HepG2 (cell line): ENCODE measurements at regions of chr3 and their contacts with region 1.

Region 1: DNA sequence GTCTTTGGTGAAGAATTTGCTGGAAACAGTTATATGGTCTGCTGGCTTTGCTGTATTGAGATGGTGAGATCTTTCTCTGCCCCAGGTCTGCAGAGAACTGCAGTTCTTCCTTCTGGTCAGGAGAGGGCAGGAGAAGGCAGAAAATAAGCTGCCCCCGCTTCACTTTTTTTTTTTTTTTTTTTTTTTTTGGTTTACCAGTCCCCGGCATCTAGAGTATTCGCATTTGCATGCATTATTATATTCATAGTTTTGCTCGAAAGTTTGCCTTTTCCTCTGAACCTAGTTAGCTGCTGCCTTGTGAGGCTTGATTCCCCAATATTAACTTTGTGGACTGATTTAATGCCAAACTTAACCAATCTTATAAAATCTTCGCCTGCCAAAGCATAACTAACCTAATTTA is 10.6 kb upstream of the PARL start:
- DNase-seq: peak; percentile 44
- ATAC-seq: peak; percentile 67
- H3K4me3 ChIP-seq: no peak overlapping the region
- H3K27ac ChIP-seq: no peak overlapping the region
- H3K4me1 ChIP-seq: peaks cover 27% of the 10 kb centered on the region
- H3K27me3 ChIP-seq: peaks cover 0 to 12% of the 10 kb centered on the region in 2 experiments; a peak in 1 of 5 replicates
- CTCF ChIP-seq: peak; percentile 75
- EP300 ChIP-seq: no peak
- POLR2A ChIP-seq: no peak
- RAD21 ChIP-seq: peak; percentile 76

Region 2: DNA sequence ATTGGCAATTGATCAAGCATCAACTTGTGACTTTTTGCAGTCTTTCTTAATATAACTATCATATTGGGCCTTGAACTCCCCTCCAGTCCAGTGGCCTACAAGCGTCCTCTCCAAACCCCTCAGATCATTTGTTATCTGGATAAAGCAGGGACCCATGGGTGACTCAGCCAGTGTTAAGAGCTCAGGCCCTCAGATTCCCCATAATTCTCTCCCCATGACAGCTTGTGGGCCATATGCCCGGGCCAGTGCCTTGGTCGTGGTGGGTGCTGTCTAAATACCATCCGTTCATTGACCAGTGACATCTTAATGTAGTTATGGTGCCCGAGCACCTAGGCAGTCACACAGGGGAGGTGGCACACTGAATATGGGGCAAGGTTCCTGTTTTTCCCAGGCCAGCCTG is 485.0 kb before region 1 on chr3:
- CTCF ChIA-PET with region 1: no interaction called
- POLR2A ChIA-PET with region 1: no interaction called
- in situ Hi-C with region 1: no loop called
- intact Hi-C with region 1: no loop called
- DNase-seq: no peak
- ATAC-seq: no peak
- H3K4me3 ChIP-seq: no peak overlapping the region
- H3K27ac ChIP-seq: no peak overlapping the region
- H3K4me1 ChIP-seq: no peaks in the 10 kb centered on the region
- H3K27me3 ChIP-seq: peaks cover 0 to 13% of the 10 kb centered on the region in 2 experiments; a peak in 4 of 5 replicates
- CTCF ChIP-seq: no peak
- EP300 ChIP-seq: no peak
- POLR2A ChIP-seq: no peak
- RAD21 ChIP-seq: no peak

Region 3: DNA sequence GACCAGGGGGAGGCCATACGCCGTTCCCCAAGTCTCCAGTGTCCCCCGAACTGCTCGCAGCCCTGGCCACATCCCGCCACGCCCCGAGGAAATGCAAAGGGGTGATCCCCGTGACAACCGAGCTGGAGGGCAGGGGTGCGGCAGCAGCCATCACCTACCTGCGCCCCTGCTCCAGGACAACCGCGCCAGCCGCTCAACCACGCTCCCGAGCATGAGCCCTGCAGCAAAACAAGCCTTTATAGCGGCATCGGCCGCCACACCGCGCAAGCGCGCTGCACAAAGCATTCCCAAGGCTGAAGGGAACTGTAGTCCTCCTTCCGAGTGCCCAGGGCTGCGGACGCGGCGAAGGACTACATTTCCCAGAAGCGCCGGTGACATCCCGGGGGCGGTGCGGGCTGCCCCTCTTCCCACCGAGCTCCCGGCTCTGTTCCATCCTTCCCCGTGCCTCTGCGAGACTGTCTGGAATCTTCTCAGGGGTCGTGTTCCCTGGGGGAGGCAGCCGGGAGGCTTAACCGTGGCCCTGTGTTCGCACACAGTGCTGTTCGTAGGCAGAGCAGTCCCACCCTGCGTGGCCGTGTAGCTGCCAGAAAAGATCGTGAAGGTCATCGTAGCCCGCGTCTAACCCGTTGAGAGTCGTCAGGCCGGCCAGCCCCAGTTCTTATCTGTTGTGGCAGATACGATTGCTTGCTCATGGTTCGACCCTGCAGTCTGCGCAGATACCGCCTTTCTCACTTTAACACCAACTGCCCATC is 122.6 kb after region 1 on chr3 and contains the start of gene ABCC5:
- CTCF ChIA-PET with region 1: interaction called, 17 read pairs
- POLR2A ChIA-PET with region 1: interaction called, 6 read pairs
- in situ Hi-C with region 1: loop called (anchors 5 kb)
- intact Hi-C with region 1: loop called (anchors 1 kb)
- DNase-seq: peak; percentile 85
- ATAC-seq: peak; percentile 99
- H3K4me3 ChIP-seq: peak within 1 kb of the TSS; percentile 73 to 97 (median 79)
- H3K27ac ChIP-seq: peak within 1 kb of the TSS; percentile 30
- H3K4me1 ChIP-seq: peaks cover 32% of the 10 kb centered on the region
- H3K27me3 ChIP-seq: no peaks in the 10 kb centered on the region
- CTCF ChIP-seq: peak; percentile 42; the same call in 1 of the 2 replicates
- EP300 ChIP-seq: no peak
- POLR2A ChIP-seq: peak; percentile 31 to 89; a peak in 2 of 4 replicates
- RAD21 ChIP-seq: 0 out of 2 replicates have a peak, but pooled peaks have one; percentile 1
- total RNA-seq, gene ABCC5: 7.8 and 12.7 TPM in 2 replicates

Region 4: DNA sequence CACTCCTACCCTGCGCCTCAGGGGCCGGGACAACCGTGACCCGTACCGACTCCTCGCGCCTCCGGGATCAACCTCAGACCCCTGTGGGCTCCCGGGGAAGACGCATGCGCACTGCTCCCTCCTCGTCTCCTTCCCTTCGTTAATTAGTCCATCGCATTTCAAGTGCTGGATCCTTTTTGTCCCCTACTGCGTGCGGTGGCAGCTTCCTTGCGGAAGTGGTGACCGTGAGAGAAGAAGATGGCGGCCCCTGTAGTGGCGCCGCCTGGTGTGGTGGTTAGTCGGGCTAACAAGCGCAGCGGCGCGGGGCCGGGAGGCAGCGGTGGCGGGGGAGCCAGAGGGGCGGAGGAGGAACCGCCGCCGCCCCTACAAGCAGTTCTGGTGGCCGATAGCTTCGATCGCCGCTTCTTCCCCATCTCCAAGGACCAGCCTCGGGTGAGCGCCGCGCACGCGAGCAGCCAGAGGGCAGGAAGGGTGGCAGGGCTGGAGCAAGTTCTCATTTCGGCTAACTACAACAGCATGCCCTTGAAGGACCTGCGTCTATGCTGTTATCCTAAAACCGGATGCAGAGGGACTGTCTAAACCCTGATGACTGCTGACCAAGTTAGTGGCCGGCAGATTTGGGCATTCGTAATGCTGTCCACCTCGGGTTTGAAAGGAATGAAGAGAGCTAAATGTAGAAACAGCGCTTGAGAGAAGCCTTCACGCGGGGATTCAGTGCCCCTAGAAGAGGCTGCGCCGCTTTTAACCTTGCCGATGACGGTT is 240.0 kb after region 1 on chr3 and contains the start of gene EIF2B5:
- CTCF ChIA-PET with region 1: no interaction called
- POLR2A ChIA-PET with region 1: interaction called, 5 read pairs
- in situ Hi-C with region 1: loop called (anchors 25 kb)
- intact Hi-C with region 1: loop called (anchors 2 kb)
- DNase-seq: peak; percentile 95
- ATAC-seq: peak; percentile 89
- H3K4me3 ChIP-seq: peak within 1 kb of the TSS; percentile 86 to 94 (median 93)
- H3K27ac ChIP-seq: peak within 1 kb of the TSS; percentile 61
- H3K4me1 ChIP-seq: peaks cover 23% of the 10 kb centered on the region
- H3K27me3 ChIP-seq: no peaks in the 10 kb centered on the region; a peak in 1 of 5 replicates
- CTCF ChIP-seq: peak; percentile 73
- EP300 ChIP-seq: 0 out of 4 replicates have a peak, but pooled peaks of 1 of the 2 experiments have one; percentile 3
- POLR2A ChIP-seq: peak; percentile 87 to 95
- RAD21 ChIP-seq: peak; percentile 41
- total RNA-seq, gene EIF2B5: 60.2 and 60.3 TPM in 2 replicates

Region 5: DNA sequence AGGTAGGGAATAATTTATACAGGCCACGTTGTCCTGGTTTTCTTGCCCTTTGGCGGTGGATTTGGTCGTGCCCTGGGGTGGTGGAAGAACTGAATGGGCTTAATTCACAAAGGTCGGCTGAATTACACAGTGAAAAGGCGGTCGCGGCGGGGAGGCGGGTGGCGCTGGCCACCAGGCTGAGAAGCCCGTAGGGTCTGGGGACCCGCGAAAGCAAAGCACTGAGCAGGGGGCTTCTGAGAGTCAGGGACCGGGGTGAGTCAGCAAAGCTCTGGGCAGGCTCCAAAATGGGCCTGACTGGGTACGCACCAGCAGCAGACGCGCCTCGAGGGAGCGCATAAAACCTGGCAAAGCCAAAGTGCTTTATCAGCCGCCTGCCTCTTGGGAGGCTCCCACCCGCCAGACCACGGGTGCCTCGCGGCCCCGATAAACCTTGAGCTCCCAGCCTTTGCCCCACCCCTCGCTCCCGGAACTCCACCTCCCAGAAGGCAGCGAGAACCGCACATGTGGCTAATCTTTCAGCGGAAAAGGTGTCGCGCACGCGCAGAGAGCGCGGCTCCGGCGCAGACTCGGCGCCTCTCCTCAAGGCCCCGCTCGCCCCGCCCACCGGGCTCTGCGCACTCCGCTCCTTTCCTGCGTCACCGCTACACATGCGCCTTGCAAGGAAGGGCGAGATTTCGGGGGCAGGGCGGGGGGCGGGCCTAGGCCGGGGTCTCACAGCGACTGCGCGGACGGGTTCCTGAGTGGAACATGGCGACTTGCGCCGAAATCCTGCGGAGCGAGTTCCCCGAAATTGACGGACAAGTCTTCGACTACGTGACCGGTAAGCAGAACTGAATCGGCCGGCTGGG is 290.4 kb after region 1 on chr3 and contains the start of gene ABCF3:
- CTCF ChIA-PET with region 1: interaction called, 4 read pairs
- POLR2A ChIA-PET with region 1: no interaction called
- in situ Hi-C with region 1: no loop called
- intact Hi-C with region 1: loop called (anchors 1 kb)
- DNase-seq: peak; percentile 97
- ATAC-seq: peak; percentile 94
- H3K4me3 ChIP-seq: peak within 1 kb of the TSS; percentile 80 to 95 (median 93)
- H3K27ac ChIP-seq: peak within 1 kb of the TSS; percentile 85
- H3K4me1 ChIP-seq: peaks cover 25% of the 10 kb centered on the region
- H3K27me3 ChIP-seq: no peaks in the 10 kb centered on the region; a peak in 1 of 5 replicates
- CTCF ChIP-seq: no peak
- EP300 ChIP-seq: 0 out of 4 replicates have a peak, but pooled peaks of 1 of the 2 experiments have one; percentile 17
- POLR2A ChIP-seq: peak; percentile 82 to 92
- RAD21 ChIP-seq: peak; percentile 46; the same call in 1 of the 2 replicates
- total RNA-seq, gene ABCF3: 32.7 and 38.8 TPM in 2 replicates

Region 6: DNA sequence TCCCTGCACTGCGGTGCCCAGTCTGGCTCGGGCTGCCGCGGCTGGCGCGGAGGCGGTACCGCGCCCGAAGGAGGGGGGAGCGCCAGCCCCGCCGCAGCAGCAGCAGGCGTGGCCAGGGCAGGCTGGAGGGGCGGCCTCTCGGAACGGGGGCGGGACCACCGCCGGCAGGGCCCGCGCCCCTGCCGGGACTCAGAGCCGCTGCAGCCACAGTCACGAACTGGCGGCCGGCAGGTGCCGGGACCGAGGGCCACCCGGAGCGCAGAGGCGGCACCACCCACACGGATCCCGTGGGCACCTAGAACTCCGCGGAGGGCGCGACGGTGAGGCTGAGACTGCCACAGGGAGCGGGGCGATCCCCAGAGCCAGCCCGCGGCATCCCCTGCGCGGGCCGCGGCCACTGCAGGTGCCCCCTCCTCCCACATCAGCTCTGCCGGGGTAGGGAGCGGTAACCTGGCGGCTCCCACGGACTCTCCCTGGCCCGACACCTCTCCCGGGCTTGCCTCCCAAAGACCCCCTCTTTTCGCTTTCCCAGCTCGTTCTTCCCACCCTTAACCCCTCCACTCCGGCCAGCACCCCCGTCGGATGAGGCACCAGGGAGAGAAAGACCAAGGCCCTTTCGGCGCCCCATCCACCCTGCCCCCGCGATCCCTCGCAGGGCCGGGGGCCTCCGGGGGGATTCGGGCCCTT is 334.2 kb after region 1 on chr3 and contains the start of gene VWA5B2:
- CTCF ChIA-PET with region 1: no interaction called
- POLR2A ChIA-PET with region 1: no interaction called
- in situ Hi-C with region 1: loop called (anchors 5 kb)
- intact Hi-C with region 1: no loop called
- DNase-seq: peak; percentile 44
- ATAC-seq: peak; percentile 90
- H3K4me3 ChIP-seq: peak within 1 kb of the TSS; percentile 56 to 80 (median 69)
- H3K27ac ChIP-seq: no peak within 1 kb of the TSS
- H3K4me1 ChIP-seq: peaks cover 11% of the 10 kb centered on the region; the same call in 1 of the 2 replicates
- H3K27me3 ChIP-seq: peaks cover 9 to 67% of the 10 kb centered on the region in 2 experiments; a peak in 4 of 5 replicates
- CTCF ChIP-seq: peak; percentile 15; the same call in 1 of the 2 replicates
- EP300 ChIP-seq: no peak
- POLR2A ChIP-seq: no peak
- RAD21 ChIP-seq: peak; percentile 9; the same call in 1 of the 2 replicates
- total RNA-seq, gene VWA5B2: 0.04 TPM in 1 of 2 replicates, not detected in the other

Region 7: GRCh38 chr3:184241447-184242296 is 346.4 kb after region 1 on chr3:
- CTCF ChIA-PET with region 1: no interaction called
- POLR2A ChIA-PET with region 1: no interaction called
- in situ Hi-C with region 1: no loop called
- intact Hi-C with region 1: loop called (anchors 5 kb)
- DNase-seq: peak; percentile 86
- ATAC-seq: peak; percentile 92
- H3K4me3 ChIP-seq: peak overlapping the region in 1 of 3 experiments; percentile 2; a peak in 1 of 6 replicates
- H3K27ac ChIP-seq: peak overlapping the region; percentile 24
- H3K4me1 ChIP-seq: peaks cover 25% of the 10 kb centered on the region
- H3K27me3 ChIP-seq: peaks cover 0 to 22% of the 10 kb centered on the region in 2 experiments; a peak in 3 of 5 replicates
- CTCF ChIP-seq: peak; percentile 99
- EP300 ChIP-seq: peak in 1 of 2 experiments; percentile 70; a peak in 1 of 4 replicates
- POLR2A ChIP-seq: no peak
- RAD21 ChIP-seq: peak; percentile 99

Region 8: GRCh38 chr3:184289426-184289938 is 394.2 kb after region 1 on chr3:
- CTCF ChIA-PET with region 1: no interaction called
- POLR2A ChIA-PET with region 1: no interaction called
- in situ Hi-C with region 1: no loop called
- intact Hi-C with region 1: loop called (anchors 5 kb)
- DNase-seq: no peak
- ATAC-seq: peak; percentile 34
- H3K4me3 ChIP-seq: no peak overlapping the region
- H3K27ac ChIP-seq: no peak overlapping the region
- H3K4me1 ChIP-seq: peaks cover 44% of the 10 kb centered on the region
- H3K27me3 ChIP-seq: peaks cover 3 to 24% of the 10 kb centered on the region in 2 experiments; a peak in 3 of 5 replicates
- CTCF ChIP-seq: peak; percentile 89
- EP300 ChIP-seq: no peak
- POLR2A ChIP-seq: no peak
- RAD21 ChIP-seq: peak; percentile 74